ENCODE measurements at regions of chr17 and their contacts with region 1.

Region 1: DNA sequence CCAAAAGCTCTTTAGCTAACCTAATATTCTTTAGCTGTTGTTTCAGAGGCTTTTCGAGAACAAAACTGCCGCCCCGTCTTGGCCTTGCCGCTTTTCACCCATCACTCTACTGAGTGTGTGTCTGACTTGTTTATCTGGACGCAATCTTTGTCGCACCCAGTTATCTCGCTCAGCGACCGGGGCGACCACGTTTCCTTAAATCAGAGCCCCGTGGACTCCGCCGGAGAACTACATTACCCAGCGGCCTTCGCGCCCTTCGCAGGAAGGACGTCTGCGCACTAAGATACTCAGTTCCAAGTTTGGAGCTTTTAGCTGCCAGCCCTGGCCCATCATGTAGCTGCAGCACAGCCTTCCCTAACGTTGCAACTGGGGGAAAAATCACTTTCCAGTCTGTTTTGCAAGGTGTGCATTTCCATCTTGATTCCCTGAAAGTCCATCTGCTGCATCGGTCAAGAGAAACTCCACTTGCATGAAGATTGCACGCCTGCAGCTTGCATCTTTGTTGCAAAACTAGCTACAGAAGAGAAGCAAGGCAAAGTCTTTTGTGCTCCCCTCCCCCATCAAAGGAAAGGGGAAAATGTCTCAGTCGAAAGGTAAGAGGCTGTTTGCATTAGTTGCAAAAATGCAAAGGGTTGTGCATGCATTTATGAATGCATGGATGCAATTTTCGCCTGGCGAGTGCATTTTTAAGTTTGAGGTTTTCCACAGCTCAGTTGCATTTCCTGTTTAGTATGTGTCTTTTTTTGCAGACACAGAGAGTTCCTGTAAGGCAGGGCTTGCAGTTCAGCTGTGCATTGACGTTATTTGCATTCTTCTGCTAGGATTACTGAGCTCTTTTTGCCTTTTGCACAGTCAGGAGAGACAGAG is at the start of gene MAP2K6:
- DNase-seq: peak; percentile 89
- H3K4me3 ChIP-seq: peak within 1 kb of the TSS; percentile 16 to 65 (median 41)
- H3K27ac ChIP-seq: peak within 1 kb of the TSS; percentile 55 to 80 (median 73)
- H3K4me1 ChIP-seq: peaks cover 9 to 47% (median 25%) of the 10 kb centered on the region in 4 donors
- H3K27me3 ChIP-seq: no peaks in the 10 kb centered on the region
- CTCF ChIP-seq: no peak
- EP300 ChIP-seq: no peak
- POLR2A ChIP-seq: no peak
- total RNA-seq, gene MAP2K6: 16.1 to 50.7 (median 45.8) TPM

Region 2: DNA sequence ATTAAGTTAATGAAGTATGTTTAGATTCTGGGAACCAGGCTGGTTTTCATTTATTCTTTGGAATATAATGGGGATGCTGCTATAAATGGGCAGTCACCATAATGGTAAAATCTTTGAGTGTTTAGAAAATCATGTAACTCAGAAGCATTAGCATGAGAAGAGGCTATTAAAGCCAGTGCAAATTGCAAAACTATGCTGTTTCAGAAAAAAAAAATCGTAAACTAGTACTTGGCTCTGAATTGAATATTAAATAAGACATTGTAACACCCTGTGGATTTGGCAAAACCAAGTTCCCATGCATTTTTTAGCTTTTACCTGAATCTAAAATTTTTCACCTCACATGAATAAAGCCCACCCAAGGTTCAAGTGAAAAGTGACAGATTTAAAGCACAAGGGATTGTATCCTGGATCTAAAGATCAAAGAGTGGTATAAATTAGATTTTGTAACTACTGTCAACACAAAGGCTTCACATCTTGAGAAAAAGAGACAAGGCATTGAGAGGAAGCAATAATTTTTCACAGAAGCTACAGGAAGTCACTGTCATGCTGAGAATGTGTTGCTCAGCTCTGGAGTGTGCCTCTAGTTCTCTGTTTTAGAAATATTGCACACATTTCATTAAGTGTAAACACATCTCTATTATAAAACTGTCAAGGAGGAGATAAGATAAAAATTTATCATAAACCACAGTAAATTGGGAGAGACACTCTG is 601.6 kb before region 1 on chr17:
- in situ Hi-C with region 1: no loop called
- intact Hi-C with region 1: no loop called
- DNase-seq: no peak
- H3K4me3 ChIP-seq: no peak overlapping the region
- H3K27ac ChIP-seq: peak overlapping the region in 1 of 4 donors; percentile 15
- H3K4me1 ChIP-seq: no peaks in the 10 kb centered on the region
- H3K27me3 ChIP-seq: no peaks in the 10 kb centered on the region
- CTCF ChIP-seq: no peak
- EP300 ChIP-seq: no peak
- POLR2A ChIP-seq: no peak

Region 3: DNA sequence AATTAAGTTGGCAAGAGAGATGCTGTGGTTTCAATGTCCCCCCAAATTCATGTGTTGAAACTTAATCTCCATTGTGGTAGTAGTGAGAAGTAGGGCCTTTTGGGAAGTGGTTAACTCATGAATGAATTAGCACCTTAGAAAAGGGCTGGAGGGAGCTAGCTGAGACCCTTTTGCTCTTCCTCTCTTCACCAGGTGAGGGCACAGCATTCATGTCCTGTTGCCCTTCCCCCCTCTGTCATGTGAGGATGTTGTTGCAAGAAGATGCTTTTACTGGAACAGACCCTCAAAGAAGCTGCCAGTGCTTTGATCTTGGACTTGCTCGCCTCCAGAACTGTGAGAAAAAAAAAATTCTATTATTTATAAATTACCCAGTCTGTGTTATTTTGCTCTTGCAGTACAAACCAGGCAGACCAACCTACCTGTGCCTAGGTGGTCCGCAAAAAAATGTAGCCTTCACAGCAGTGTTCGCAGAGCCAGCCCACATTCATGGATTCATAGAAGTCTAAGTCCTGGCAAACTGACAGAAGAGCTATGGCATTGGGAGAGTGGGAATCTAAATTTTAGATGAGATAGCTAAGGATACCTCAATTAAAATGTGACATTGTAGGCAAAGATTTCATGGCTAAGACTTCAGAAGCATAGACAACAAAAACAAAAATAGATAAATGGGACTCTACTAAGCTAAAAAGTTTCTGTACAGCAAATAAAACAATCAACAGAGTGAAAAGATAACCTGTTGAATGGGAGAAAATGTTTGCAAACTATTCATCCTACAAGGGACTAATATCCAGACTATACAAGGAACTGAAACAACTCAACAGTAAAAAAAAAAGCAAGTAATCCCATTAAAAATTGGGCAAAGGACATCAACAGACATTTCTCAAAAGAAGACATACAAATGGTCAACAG is 55.7 kb before region 1 on chr17:
- in situ Hi-C with region 1: no loop called
- intact Hi-C with region 1: loop called (anchors 2 kb)
- DNase-seq: no peak
- H3K4me3 ChIP-seq: no peak overlapping the region
- H3K27ac ChIP-seq: no peak overlapping the region
- H3K4me1 ChIP-seq: no peaks in the 10 kb centered on the region
- H3K27me3 ChIP-seq: no peaks in the 10 kb centered on the region
- CTCF ChIP-seq: peak in 1 of 5 experiments; percentile 6
- EP300 ChIP-seq: no peak
- POLR2A ChIP-seq: no peak